ENCODE measurements at regions of chr17 and their contacts with region 1.

Region 1: GRCh38 chr17:31216053-31216751 is 80.8 kb downstream of the OMG start:
- DNase-seq: peak; percentile 24 to 65
- H3K4me3 ChIP-seq: no peak overlapping the region
- H3K4me1 ChIP-seq: peaks cover 16% of the 10 kb centered on the region
- H3K27me3 ChIP-seq: no peaks in the 10 kb centered on the region

Region 2: DNA sequence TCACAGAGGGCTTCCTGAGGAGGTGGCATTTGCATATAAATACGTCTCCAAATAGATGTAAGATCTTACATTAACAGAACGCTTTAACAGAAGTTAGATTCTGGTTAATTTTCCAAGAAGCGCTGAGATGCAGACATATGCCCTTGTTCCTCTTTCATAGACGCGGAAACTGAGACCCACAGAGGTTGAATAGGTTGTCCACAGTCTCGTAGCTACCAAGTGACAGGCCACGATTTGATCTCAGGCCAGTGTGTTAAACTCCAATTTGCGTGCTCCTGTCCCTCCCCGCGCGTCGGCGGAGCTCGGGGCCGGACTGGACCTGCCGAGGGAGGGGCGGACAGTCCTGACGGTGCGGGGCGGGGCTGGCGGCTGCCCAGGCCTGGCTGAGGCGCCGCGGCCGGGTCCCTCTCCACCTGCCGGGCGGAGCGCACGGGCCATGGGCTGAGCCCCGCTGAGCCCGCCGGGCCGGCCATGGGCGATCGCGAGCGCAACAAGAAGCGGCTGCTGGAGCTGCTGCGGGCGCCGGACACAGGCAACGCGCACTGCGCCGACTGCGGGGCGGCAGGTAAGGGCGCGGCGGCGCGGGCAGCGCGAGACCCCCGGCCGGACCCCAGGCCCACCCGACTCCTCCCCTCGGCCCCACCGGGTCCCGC is 294.5 kb before region 1 on chr17 and contains the start of gene ADAP2:
- in situ Hi-C with region 1: no loop called
- DNase-seq: peak; percentile 21 to 79
- H3K4me3 ChIP-seq: peak within 1 kb of the TSS; percentile 47
- H3K4me1 ChIP-seq: peaks cover 4% of the 10 kb centered on the region
- H3K27me3 ChIP-seq: no peaks in the 10 kb centered on the region; the same call in 1 of the 2 replicates

Region 3: DNA sequence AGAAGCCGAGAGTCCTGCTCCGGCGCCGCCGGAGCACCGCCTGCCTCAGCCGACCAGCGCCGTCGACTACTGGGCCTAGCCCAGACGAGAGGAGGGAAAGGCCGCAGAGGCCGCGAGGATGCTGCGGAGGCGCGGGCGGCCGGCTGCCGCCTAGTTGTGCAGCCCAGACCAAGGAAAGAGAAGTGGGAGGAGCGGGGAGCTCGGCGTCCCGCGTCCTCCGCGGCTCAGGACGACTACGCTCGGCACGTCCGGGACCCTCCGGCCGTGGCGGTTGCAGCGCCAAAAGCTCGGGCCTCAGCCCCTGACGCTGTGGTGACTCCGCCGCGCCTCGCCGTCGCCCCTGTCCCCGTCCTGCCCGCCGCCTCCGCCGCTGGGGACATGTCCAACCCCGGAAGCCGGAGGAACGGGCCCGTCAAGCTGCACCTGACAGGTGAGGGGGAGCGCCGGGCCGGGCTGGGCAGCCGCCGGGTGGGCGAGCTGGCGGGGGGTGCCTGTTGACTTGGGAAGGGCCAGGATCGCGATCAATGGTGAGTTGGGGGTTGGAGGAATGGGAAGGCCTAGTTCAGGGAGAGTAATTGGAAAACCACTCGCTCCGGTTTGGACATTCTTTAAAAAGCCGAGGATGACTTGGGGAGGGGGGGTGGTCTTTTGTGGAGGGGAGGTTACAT is 207.7 kb before region 1 on chr17:
- in situ Hi-C with region 1: loop called (anchors 25 kb)
- DNase-seq: peak; percentile 49 to 73
- H3K4me3 ChIP-seq: peak overlapping the region; percentile 52
- H3K4me1 ChIP-seq: peaks cover 11% of the 10 kb centered on the region
- H3K27me3 ChIP-seq: no peaks in the 10 kb centered on the region

Region 4: DNA sequence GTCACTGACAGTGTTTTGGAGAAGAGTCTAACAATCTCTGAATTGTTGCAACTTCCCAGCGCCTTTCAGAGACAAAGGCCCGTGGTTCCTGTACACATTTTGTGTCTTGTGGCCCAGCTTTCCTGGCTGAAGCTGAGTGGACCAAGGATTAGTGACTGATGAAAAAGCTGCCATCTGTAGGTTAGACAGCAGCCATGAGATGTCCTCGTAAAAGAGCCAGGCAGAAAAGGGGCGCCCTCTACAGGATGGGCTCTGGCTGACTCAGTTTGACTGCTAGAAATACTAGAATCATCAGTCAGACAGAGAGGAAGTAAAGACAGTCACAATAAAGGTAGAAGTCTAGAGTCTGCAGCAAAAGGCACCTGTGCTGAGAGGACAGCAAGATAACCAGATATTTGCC is 147.9 kb before region 1 on chr17:
- in situ Hi-C with region 1: no loop called
- DNase-seq: peak; percentile 57 to 75
- H3K4me3 ChIP-seq: no peak overlapping the region
- H3K4me1 ChIP-seq: peaks cover 26% of the 10 kb centered on the region
- H3K27me3 ChIP-seq: no peaks in the 10 kb centered on the region